Activated CD4-positive, alpha-beta memory T cell treated with anti-CD3 and anti-CD28 coated beads for 36 hours (primary cell): ENCODE measurements at regions of chr5 and their contacts with region 1.

Region 1: DNA sequence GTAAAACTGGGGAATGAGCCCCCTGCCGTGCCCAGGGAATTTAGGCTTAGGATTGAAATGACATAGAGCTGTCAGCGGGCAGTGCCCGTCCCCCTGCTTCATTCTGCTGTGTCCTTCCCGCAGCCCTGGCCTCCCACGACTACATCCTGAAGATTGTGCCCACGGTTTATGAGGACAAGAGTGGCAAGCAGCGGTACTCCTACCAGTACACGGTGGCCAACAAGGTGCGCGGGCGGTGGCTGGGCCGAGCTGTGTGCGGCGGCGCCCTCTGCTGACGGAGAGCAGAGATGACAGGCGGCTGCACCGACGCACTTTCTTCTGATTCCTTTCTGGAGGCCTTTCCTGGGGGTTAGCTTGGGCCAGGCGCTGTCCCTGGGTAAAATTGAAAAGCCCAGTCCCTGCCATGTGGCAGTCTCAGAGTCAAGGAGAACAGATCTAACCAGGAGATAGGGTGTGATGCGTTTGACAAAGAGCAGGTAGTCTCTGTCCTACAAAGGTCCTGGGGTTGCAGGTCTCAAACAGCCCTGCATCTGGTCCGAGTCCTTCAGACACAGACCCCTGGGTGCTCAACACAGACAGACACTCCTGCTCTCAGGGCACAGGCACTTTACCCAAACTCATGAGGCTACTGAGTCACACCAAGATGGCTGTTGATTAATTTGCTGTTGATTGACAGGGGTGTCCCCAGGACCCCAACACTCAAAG is 26.8 kb upstream of the RPL26L1 start:
- DNase-seq: peak; percentile 82
- H3K4me3 Mint-ChIP-seq: no peak overlapping the region
- H3K27ac Mint-ChIP-seq: no peak overlapping the region
- H3K4me1 Mint-ChIP-seq: peaks cover 6% of the 10 kb centered on the region
- H3K27me3 Mint-ChIP-seq: no peaks in the 10 kb centered on the region

Region 2: DNA sequence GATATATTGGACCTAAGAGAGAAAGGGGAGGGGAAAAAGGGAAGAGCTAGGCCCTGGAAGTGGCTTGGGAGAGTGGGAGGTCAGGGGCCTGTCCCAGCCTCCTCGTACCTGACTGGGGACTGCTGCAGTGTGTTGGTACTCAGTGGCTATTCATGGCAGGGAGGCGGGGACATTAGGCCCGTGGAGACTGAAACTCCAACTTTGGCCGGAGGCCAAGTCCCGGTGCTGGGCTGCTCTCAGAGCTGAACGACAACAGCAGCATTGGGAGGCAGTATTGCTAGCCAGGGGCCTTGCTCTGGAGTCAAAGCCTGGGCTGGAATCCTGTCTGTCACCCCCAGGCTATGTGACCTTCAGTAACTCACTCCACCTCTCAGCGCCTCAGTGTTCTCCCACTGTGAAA is 253.6 kb before region 1 on chr5:
- CTCF ChIA-PET with region 1: no interaction called
- POLR2A ChIA-PET with region 1: no interaction called
- intact Hi-C with region 1: no loop called
- DNase-seq: no peak
- H3K4me3 Mint-ChIP-seq: no peak overlapping the region
- H3K27ac Mint-ChIP-seq: no peak overlapping the region
- H3K4me1 Mint-ChIP-seq: peaks cover 4% of the 10 kb centered on the region
- H3K27me3 Mint-ChIP-seq: peaks cover 3% of the 10 kb centered on the region

Region 3: DNA sequence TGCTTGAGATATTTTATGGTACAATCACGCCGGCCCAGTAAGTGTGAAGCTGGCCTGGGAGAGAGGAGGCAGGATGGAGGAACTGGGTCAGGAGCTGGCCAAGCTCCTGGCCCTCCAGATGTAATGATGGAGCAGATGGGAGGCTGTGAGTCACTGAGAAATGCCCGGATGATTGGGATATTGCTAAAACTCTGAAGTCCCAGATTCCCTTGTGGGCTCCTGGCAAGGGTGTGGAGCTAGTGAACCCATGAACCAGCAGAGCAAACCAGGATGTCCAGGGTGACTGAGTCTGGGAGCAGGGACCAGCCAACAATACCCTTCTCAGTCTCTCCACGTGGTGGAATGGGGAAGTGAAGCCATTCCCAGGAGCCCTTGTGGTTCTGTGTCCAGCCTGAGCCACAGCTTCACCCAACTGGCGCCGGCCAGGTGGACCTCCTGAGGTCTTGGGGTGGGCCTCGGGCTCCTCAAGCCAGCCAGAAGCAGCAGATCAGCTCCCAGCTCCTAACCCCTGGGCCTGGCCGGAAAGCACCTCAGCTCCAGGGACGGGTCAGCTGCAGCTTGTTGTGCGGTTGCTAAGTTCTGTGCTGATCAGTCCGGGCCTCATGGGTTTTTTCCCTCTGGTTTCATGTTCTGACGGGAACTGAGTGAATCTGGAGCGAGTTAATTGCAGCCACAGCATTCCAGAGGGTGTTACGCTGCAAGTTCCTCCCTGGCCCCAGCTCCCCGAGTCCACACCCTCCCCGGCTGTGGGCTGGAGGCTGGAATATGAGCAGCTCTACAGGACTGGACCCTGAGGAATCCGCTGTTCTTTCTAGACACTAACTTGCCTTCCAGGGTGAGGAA is 199.1 kb before region 1 on chr5:
- CTCF ChIA-PET with region 1: interaction called, 10 read pairs
- POLR2A ChIA-PET with region 1: no interaction called
- intact Hi-C with region 1: no loop called
- DNase-seq: no peak
- H3K4me3 Mint-ChIP-seq: no peak overlapping the region
- H3K27ac Mint-ChIP-seq: no peak overlapping the region
- H3K4me1 Mint-ChIP-seq: no peaks in the 10 kb centered on the region
- H3K27me3 Mint-ChIP-seq: no peaks in the 10 kb centered on the region